ENCODE measurements at regions of chr6 and their contacts with region 1.

Region 1: GRCh38 chr6:74971633-74972032 is 234.2 kb downstream of the COL12A1 start:
- DNase-seq: peak; percentile 5
- H3K4me3 ChIP-seq: no peak overlapping the region
- H3K27ac ChIP-seq: no peak overlapping the region
- H3K4me1 ChIP-seq: peaks cover 18% of the 10 kb centered on the region
- H3K27me3 ChIP-seq: no peaks in the 10 kb centered on the region
- CTCF ChIP-seq: no peak
- POLR2A ChIP-seq: no peak

Region 2: DNA sequence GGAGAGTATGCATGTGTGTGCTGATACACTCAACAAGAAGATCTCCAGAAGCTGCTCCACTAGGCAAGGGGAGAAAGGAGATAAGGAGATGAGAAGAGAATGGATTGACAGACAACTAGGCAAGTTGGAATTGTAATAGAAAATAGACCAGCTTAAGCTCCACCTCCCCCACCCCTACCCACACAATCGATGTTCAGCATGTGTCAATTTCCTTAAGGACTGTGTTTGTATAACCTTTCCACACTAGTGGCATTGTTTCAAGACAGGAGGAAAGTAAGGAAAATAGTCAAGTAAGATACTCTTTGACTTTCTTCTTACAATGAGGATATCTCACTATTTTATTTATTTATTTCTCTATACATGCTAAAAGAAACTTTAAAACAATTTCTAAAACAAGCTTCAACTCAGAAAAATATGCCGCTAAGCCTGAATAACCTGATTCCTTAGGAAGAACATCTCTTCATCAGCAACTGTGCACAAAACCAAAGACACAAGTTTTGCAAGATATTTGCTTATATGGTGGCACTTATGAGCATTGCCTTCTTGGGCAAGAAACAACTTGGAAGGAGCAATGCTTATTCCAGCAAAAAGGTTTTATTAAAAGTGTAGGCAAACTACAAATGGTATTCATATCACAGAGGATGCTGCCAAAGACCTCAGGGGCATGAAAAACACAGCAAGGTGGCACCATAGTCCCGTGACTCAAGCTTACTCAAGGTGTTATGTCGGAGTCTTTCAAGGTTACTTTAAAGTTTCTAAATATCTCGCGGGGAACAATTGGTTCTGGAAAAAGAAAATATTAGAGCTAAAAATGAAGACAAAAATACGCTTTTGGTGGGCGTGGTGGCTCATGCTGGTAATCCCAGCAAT is 14.8 kb before region 1 on chr6:
- CTCF ChIA-PET with region 1: interaction called, 3 read pairs
- POLR2A ChIA-PET with region 1: no interaction called
- dilution Hi-C with region 1: no loop called
- intact Hi-C with region 1: loop called (anchors 1 kb)
- DNase-seq: peak; percentile 82
- H3K4me3 ChIP-seq: no peak overlapping the region
- H3K27ac ChIP-seq: no peak overlapping the region
- H3K4me1 ChIP-seq: peaks cover 15% of the 10 kb centered on the region
- H3K27me3 ChIP-seq: no peaks in the 10 kb centered on the region
- CTCF ChIP-seq: no peak
- POLR2A ChIP-seq: no peak

Region 3: GRCh38 chr6:75044846-75045245 is 73.2 kb after region 1 on chr6:
- CTCF ChIA-PET with region 1: no interaction called
- POLR2A ChIA-PET with region 1: no interaction called
- dilution Hi-C with region 1: no loop called
- intact Hi-C with region 1: no loop called
- DNase-seq: no peak
- H3K4me3 ChIP-seq: no peak overlapping the region
- H3K27ac ChIP-seq: no peak overlapping the region
- H3K4me1 ChIP-seq: no peaks in the 10 kb centered on the region
- H3K27me3 ChIP-seq: no peaks in the 10 kb centered on the region
- CTCF ChIP-seq: no peak
- POLR2A ChIP-seq: no peak

Measured in endothelial cell of umbilical vein (primary cell).